ENCODE measurements at regions of chr4 and their contacts with region 1.

Region 1: GRCh38 chr4:155353923-155354540 is 22.7 kb downstream of the MAP9 start:
- DNase-seq: peak; percentile 74

Region 2: DNA sequence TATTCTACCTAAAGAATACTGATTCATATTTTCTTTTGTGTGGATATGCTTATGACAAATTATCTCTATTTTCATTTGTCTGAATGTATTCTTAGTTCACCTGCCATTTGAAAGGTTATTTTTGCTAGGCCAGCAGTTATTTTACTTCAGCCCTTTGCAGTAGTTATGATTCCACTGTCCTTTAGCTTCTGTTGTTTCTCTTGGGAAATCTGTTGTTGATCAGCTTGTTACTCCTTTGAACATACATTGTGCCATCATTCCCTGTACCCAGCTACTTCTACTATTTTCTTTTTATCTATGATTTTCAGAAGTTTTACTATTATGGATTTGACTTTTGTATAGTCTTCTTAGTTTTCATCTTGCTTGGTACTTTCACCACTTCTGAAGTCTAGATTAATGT is 535.8 kb before region 1 on chr4:
- intact Hi-C with region 1: loop called (anchors 10 kb)
- DNase-seq: no peak

Region 3: GRCh38 chr4:154982187-154983047 is 371.6 kb before region 1 on chr4:
- intact Hi-C with region 1: loop called (anchors 5 kb)
- DNase-seq: no peak

Region 4: GRCh38 chr4:155473420-155474095 is 119.5 kb after region 1 on chr4:
- intact Hi-C with region 1: no loop called
- DNase-seq: no peak